Activated naive CD8-positive, alpha-beta T cell treated with anti-CD3 and anti-CD28 coated beads, Interleukin-2, amount 10 ng/mL, durations not matched to agents 7 days and 5 days (primary cell): ENCODE measurements at regions of chr19 and their contacts with region 1.

Region 1: GRCh38 chr19:36114763-36115452 is at the start of gene POLR2I:
- DNase-seq: peak; percentile 97
- ATAC-seq: peak; percentile 95
- H3K4me3 Mint-ChIP-seq: peak within 1 kb of the TSS; percentile 98
- H3K27ac Mint-ChIP-seq: peak within 1 kb of the TSS; percentile 98
- H3K4me1 Mint-ChIP-seq: peaks cover 29% of the 10 kb centered on the region
- H3K27me3 Mint-ChIP-seq: no peaks in the 10 kb centered on the region
- total RNA-seq, gene POLR2I: 46.1 to 49.8 TPM

Region 2: GRCh38 chr19:36132489-36132891 is 17.6 kb after region 1 on chr19:
- POLR2A ChIA-PET with region 1: interaction called, 14 read pairs
- DNase-seq: no peak
- ATAC-seq: peak; percentile 59
- H3K4me3 Mint-ChIP-seq: peak overlapping the region; percentile 42
- H3K27ac Mint-ChIP-seq: peak overlapping the region; percentile 72
- H3K4me1 Mint-ChIP-seq: peaks cover 24% of the 10 kb centered on the region
- H3K27me3 Mint-ChIP-seq: peaks cover 2% of the 10 kb centered on the region

Region 3: GRCh38 chr19:36163813-36164212 is 48.9 kb after region 1 on chr19:
- POLR2A ChIA-PET with region 1: no interaction called
- DNase-seq: no peak
- ATAC-seq: no peak
- H3K4me3 Mint-ChIP-seq: no peak overlapping the region
- H3K27ac Mint-ChIP-seq: no peak overlapping the region
- H3K4me1 Mint-ChIP-seq: no peaks in the 10 kb centered on the region
- H3K27me3 Mint-ChIP-seq: no peaks in the 10 kb centered on the region